Activated CD4-positive, alpha-beta T cell treated with anti-CD3 and anti-CD28 coated beads, Interleukin-2, amount 10 ng/mL, durations not matched to agents 24 days and 14 days (primary cell): ENCODE measurements at regions of chr10 and their contacts with region 1.

Region 1: DNA sequence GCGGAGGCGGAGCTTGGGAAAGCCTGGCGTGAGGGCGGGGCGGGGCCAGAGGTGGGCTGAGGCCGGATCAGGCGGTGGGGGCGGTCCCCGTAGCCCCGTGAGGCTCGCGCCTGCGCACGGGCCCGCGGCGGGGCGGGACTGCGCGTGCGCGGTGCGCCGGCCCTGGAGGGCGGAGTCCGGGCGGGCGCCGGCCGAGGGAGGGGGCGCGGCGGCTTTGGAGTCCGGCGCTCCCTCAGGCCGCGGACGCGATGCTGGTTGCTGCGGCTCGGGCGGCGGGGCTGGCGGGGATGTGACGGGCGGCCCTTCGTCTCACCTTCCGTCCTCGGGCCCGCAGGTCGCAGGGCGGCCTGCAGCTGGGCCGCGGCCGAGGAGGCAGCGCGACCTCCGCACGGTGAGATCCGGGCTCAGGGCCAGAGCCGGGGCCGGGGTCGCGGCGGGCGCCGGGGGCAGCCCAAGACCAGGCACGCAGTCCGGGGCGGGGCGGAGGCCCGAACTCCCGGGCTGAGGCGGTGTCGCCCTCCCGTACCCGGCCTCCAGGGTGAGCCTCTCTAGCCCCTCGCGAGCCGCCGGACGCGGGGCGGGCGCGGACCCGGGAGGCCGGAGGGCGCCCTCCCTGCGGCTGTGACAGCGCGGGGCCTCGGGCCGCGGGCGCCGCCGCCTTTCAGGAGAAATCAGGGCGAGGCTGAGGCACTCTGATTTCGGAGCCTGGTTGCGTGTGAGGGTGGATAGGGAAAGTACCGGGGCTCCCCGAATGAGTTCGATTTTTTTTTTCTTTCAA is at the start of gene CCSER2:
- DNase-seq: peak; percentile 98
- H3K4me3 Mint-ChIP-seq: peak within 1 kb of the TSS; percentile 95
- H3K27ac Mint-ChIP-seq: peak within 1 kb of the TSS; percentile 94
- H3K4me1 Mint-ChIP-seq: peaks cover 35% of the 10 kb centered on the region
- H3K27me3 Mint-ChIP-seq: peaks cover 5% of the 10 kb centered on the region
- total RNA-seq, gene CCSER2: 42.9 and 45.6 TPM in 2 replicates

Region 2: DNA sequence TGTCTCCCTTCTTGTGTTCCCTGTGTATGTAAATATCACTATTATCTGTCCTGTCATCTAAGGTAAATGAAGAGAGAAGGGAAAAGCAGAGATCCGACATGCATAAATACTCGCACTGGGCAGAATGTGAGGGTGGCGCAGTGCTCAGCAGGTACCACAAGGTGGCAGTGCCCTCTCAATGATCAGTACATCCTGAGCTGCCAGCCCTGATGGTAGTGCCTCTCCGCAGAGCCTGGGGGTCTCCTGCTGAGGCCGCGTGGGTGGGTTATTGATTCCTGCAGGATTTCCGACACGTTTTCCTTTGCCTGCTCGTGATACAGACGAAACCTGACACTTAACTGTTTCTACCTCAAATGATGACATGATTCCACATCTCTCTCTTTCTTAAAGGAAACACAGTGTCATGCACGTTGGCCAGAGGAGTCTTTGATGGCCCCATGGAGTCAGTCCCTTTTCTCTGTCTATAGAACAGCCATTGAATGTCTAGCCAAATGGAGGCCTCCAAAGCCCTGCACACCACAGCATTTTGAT is 63.9 kb before region 1 on chr10:
- intact Hi-C with region 1: loop called (anchors 1 kb)
- DNase-seq: peak; percentile 91
- H3K4me3 Mint-ChIP-seq: no peak overlapping the region
- H3K27ac Mint-ChIP-seq: no peak overlapping the region
- H3K4me1 Mint-ChIP-seq: peaks cover 16% of the 10 kb centered on the region
- H3K27me3 Mint-ChIP-seq: peaks cover 20% of the 10 kb centered on the region

Region 3: GRCh38 chr10:84308481-84309304 is 19.9 kb before region 1 on chr10:
- intact Hi-C with region 1: loop called (anchors 1 kb)
- DNase-seq: peak; percentile 81
- H3K4me3 Mint-ChIP-seq: peak overlapping the region; percentile 33
- H3K27ac Mint-ChIP-seq: peak overlapping the region; percentile 57
- H3K4me1 Mint-ChIP-seq: peaks cover 31% of the 10 kb centered on the region
- H3K27me3 Mint-ChIP-seq: peaks cover 3% of the 10 kb centered on the region

Region 4: DNA sequence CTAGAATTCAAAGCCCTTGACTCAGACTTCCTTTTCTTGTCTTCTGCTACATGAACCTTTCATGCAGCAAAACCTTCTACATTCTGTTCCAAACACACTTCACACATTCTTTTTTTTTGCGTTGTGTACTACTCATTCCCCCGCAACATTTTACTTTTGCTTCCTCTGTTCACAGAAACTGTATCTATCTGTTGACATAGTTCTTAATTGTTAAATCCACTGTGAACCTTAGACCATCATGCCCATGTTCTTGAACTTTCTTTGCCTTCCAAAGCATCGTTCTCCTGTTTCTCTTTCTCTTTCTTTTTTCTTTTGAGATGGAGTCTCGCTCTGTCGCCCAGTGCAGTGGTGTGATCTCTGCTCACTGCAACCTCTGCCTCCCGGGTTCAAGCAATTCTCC is 14.0 kb after region 1 on chr10:
- intact Hi-C with region 1: loop called (anchors 2 kb)
- DNase-seq: no peak
- H3K4me3 Mint-ChIP-seq: peak overlapping the region; percentile 72
- H3K27ac Mint-ChIP-seq: peak overlapping the region; percentile 76
- H3K4me1 Mint-ChIP-seq: peaks cover 54% of the 10 kb centered on the region
- H3K27me3 Mint-ChIP-seq: no peaks in the 10 kb centered on the region

Region 5: GRCh38 chr10:84375011-84375410 is 46.4 kb after region 1 on chr10:
- intact Hi-C with region 1: no loop called
- DNase-seq: peak; percentile 82
- H3K4me3 Mint-ChIP-seq: no peak overlapping the region
- H3K27ac Mint-ChIP-seq: no peak overlapping the region
- H3K4me1 Mint-ChIP-seq: peaks cover 17% of the 10 kb centered on the region
- H3K27me3 Mint-ChIP-seq: no peaks in the 10 kb centered on the region